Colonic mucosa (tissue), 4 donors: ENCODE measurements at regions of chr12 and their contacts with region 1.

Region 1: DNA sequence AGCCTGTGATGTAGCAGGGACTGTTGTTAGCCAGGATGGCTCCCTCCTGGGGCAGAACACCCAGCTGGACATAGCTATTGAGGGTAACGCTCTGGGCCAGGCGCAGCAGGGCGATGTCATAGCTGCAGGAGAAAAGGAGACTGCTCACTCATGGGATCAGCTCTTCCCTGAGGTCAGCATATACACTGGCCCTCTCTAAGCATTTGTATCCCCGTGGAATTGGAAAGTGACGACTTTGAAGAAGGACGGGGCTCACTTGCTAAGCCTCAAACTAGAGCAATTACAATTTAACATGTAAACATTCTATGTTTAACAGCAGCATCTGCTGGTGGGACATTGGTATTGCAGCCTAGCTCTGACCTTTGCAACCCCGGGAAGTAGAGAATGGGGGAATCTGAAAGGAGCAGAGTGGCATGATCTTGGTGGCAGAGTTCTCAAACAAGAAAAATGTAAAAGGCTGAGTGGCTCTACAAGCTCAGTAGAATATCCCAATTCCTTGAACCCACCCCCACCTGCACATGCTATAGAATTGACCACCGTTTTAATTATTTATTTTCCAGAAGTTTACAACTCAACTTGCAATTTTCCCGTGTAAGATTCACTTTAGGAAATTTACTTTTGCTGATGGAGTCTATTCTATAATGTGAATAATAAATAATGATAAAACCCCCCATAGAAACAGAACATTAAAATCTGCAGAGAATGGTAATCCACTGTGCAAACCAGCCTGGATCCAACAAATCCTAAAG is 5.0 kb downstream of the CELA1 start:
- DNase-seq: peak; percentile 86
- H3K4me3 ChIP-seq: peak overlapping the region; percentile 24
- H3K27ac ChIP-seq: no peak overlapping the region
- H3K4me1 ChIP-seq: peaks cover 3% of the 10 kb centered on the region
- H3K27me3 ChIP-seq: no peaks in the 10 kb centered on the region
- CTCF ChIP-seq: peak; percentile 99

Region 2: GRCh38 chr12:51047655-51048540 is 293.5 kb before region 1 on chr12 and contains the start of gene LETMD1:
- intact Hi-C with region 1: loop called (anchors 10 kb)
- DNase-seq: peak; percentile 96
- H3K4me3 ChIP-seq: peak within 1 kb of the TSS; percentile 51
- H3K27ac ChIP-seq: peak within 1 kb of the TSS; percentile 96
- H3K4me1 ChIP-seq: no peaks in the 10 kb centered on the region
- H3K27me3 ChIP-seq: no peaks in the 10 kb centered on the region
- CTCF ChIP-seq: peak; percentile 92
- total RNA-seq, gene LETMD1: 54.8 to 67.8 TPM

Region 3: DNA sequence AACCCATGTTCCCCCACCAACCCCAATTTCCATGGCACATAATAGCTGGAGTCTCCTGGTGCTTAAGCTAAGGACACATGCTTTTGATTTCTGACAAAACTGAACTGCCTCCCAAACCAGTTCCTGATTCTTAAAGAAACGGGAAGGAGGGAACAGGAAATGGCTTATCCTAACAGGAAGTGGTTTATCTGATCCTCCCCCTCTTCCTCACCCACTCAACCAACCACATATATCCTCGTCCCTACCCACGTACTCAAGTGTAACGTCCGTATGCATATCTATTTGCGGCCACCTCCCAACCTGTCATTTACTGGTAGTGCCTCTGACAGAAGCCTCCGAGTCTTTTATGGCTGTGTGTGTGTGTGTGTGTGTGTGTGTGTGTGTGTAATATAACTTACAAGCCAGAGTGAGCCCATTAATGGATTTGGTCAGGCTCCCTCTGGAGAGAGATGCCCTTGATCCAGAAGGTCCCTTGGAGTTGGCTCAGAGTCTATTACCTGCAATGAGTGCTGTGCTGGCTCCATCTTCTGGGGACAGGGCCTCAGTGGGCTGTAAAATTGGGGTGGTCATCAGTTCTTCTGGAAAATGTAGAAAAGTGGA is 95.1 kb before region 1 on chr12:
- intact Hi-C with region 1: no loop called
- DNase-seq: peak; percentile 42
- H3K4me3 ChIP-seq: no peak overlapping the region
- H3K27ac ChIP-seq: no peak overlapping the region
- H3K4me1 ChIP-seq: no peaks in the 10 kb centered on the region
- H3K27me3 ChIP-seq: no peaks in the 10 kb centered on the region
- CTCF ChIP-seq: no peak

Region 4: DNA sequence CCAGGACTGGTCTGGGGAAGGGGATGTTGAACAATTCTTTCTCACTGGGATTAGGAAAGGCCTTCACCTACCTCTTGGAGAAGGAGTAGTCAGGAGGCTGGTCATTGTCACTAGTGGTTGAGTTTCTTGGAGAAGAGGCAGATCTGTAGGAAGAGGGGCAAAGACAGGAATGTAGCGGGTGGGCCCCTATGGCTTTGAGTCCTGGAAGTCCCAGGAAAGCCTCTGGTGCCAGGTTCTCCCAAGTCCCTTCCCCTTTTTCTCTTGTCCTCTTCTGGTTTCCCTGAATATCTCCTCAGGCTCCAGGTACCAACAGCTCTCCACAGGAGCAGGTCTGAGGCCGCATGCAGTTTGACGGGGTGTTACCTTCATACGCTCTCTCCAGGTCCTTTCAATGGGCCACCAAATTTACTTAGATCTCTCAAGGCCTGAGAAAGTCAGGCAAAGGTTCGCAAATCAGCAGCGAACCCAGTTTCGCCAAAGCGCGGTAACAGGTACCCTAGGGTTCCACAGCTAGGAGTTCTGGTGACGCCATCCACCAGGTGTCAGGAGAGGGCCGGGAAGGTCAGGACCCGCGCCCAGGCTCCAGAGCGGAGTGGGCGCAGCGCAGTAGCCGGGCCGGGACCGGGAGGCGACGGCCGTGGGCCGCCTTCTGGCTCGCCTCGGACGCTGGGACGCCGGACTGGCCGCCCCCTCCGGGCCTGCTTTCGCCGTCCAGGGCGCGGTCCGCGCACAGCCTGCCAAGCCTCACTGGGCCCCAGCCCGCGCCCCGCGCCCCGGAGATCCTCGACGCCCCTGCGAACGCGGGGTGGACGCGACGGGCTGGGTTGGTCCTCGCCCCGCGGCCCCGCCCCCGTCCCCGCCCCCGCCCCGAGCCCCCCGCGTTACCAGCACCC is 72.0 kb before region 1 on chr12:
- intact Hi-C with region 1: loop called (anchors 5 kb)
- DNase-seq: peak; percentile 86
- H3K4me3 ChIP-seq: peak overlapping the region; percentile 46
- H3K27ac ChIP-seq: peak overlapping the region; percentile 96
- H3K4me1 ChIP-seq: peaks cover 4% of the 10 kb centered on the region
- H3K27me3 ChIP-seq: no peaks in the 10 kb centered on the region
- CTCF ChIP-seq: peak; percentile 36